Prostate gland (tissue), 2 donors: ENCODE measurements at regions of chr12 and their contacts with region 1.

Region 1: DNA sequence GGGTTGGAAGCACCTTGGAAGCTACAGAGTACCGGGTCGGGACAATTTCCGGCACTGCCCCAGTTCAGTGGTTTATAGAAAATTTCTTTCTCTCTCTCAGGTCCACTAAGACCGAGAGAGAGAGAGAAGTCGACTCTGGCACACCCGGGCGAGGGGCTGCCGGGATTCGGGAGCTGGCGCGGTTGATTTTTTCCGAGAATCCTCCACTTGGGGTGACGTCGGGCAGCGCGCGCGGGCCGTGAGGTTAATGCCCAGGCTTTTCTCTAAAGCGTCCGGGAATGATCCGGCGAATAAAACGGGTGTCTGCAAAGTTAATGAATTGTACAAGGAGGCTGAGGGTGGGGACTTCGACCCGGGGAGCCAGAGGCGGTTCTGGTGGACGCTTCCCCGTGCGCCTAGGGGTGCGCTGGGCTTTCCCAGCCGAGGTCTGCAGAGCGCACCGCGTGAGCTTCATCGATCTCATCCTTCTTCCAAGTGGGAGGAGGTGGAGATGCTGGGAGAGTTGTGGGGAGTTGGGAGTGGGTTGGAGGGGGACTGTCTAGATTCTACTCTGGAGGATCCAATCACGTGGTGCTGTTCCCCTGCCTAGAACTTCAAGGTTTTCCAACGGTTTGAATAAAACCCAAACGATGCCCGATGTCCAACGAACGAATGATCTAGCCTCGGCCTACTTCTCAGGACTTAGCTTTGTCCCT is 51.9 kb upstream of the TBX3 start:
- DNase-seq: no peak
- H3K4me3 ChIP-seq: no peak overlapping the region
- H3K27ac ChIP-seq: peak overlapping the region; percentile 66 to 83
- H3K4me1 ChIP-seq: peaks cover 5% of the 10 kb centered on the region
- H3K27me3 ChIP-seq: no peaks in the 10 kb centered on the region
- CTCF ChIP-seq: no peak
- POLR2A ChIP-seq: no peak

Region 2: DNA sequence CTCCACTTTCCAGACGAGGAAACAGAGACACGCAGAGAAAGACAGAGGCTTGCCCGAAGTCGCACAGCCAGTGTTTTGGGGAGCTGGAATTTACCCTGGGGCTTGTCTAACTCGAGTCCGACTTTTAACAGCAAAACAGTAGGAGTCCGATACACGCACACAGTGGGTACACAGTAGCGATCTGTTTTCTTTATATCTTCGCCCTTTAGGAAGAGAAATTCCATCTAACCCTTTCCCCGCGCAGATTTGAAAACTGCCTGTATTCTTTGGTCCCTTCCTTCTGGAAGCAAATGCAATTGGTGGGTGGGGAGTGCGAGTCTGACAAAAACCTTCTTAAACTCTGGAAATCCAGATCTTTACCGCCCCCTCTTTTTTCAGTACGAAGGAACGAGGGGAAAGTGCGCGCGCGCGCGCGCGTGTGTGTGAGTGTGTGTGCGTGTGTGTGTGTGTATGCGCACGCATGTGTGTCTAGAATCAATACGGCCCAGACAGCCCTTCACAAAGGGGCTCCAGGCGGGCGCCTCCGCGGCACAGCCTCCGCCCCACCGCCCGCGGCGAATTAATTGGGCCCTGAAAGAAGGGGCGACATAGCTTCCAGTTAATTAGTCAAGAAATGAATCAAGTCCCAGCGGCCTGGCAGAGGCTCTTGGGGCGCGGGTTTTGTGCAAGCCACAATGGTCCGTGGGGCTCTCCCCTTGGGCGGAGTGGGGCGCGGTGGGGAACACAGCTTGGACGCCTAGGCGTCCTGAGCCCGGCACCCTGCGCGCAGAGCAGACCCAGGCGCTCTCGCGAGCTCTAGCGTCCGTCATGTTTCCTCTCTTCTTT is 37.9 kb before region 1 on chr12:
- intact Hi-C with region 1: loop called (anchors 5 kb)
- DNase-seq: no peak
- H3K4me3 ChIP-seq: peak overlapping the region; percentile 32 to 39
- H3K27ac ChIP-seq: peak overlapping the region; percentile 43 to 60
- H3K4me1 ChIP-seq: peaks cover 12% of the 10 kb centered on the region
- H3K27me3 ChIP-seq: no peaks in the 10 kb centered on the region
- CTCF ChIP-seq: no peak
- POLR2A ChIP-seq: no peak